ENCODE measurements at regions of chr15 and their contacts with region 1.

Region 1: DNA sequence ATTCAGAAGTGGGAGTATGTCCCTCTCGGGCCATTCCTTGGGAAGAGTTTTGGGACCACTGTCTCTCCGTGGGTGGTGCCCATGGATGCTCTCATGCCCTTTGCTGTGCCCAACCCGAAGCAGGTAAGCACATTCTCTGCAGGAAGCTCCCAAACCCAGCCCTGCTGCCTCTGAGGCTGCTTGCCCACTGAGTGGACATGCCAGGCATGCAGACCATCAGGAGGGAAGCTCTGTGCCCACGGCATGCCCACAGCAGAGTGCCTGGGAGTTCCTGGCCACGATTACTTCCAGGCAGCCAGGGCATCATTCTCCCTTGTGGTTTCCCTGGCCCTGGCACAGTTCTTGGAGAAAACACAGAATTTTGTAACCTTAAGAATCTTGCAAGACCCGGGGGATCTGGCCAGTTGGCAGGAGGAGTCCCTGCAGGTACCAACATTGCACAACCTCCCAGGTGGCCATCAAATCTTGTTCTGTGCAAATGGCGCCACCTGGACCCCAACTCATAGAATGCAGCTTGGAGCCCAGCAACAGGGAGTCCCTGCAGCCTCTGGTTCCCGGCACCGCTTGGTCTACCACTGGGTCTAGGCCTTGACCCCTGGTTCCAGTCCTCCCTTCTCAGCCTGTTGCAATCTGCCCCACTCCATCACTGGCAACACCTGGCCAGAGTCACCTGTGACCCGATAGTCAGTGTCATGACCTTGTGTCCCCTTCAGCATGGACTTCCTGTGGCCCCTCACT is 20.4 kb downstream of the FAH start:
- DNase-seq: peak; percentile 84
- H3K4me3 Mint-ChIP-seq: no peak overlapping the region
- H3K27ac Mint-ChIP-seq: no peak overlapping the region
- H3K4me1 Mint-ChIP-seq: no peaks in the 10 kb centered on the region
- H3K27me3 Mint-ChIP-seq: no peaks in the 10 kb centered on the region

Region 2: GRCh38 chr15:79853458-79854328 is 319.5 kb before region 1 on chr15:
- CTCF ChIA-PET with region 1: interaction called, 12 read pairs
- DNase-seq: peak; percentile 70
- H3K4me3 Mint-ChIP-seq: no peak overlapping the region
- H3K27ac Mint-ChIP-seq: no peak overlapping the region
- H3K4me1 Mint-ChIP-seq: peaks cover 12% of the 10 kb centered on the region
- H3K27me3 Mint-ChIP-seq: no peaks in the 10 kb centered on the region

Region 3: GRCh38 chr15:79989682-79990081 is 183.5 kb before region 1 on chr15:
- CTCF ChIA-PET with region 1: interaction called, 10 read pairs
- DNase-seq: no peak
- H3K4me3 Mint-ChIP-seq: no peak overlapping the region
- H3K27ac Mint-ChIP-seq: no peak overlapping the region
- H3K4me1 Mint-ChIP-seq: peaks cover 3% of the 10 kb centered on the region
- H3K27me3 Mint-ChIP-seq: peaks cover 21% of the 10 kb centered on the region

Region 4: GRCh38 chr15:80041494-80042253 is 131.5 kb before region 1 on chr15:
- CTCF ChIA-PET with region 1: no interaction called
- DNase-seq: no peak
- H3K4me3 Mint-ChIP-seq: no peak overlapping the region
- H3K27ac Mint-ChIP-seq: no peak overlapping the region
- H3K4me1 Mint-ChIP-seq: no peaks in the 10 kb centered on the region
- H3K27me3 Mint-ChIP-seq: peaks cover 7% of the 10 kb centered on the region

Region 5: DNA sequence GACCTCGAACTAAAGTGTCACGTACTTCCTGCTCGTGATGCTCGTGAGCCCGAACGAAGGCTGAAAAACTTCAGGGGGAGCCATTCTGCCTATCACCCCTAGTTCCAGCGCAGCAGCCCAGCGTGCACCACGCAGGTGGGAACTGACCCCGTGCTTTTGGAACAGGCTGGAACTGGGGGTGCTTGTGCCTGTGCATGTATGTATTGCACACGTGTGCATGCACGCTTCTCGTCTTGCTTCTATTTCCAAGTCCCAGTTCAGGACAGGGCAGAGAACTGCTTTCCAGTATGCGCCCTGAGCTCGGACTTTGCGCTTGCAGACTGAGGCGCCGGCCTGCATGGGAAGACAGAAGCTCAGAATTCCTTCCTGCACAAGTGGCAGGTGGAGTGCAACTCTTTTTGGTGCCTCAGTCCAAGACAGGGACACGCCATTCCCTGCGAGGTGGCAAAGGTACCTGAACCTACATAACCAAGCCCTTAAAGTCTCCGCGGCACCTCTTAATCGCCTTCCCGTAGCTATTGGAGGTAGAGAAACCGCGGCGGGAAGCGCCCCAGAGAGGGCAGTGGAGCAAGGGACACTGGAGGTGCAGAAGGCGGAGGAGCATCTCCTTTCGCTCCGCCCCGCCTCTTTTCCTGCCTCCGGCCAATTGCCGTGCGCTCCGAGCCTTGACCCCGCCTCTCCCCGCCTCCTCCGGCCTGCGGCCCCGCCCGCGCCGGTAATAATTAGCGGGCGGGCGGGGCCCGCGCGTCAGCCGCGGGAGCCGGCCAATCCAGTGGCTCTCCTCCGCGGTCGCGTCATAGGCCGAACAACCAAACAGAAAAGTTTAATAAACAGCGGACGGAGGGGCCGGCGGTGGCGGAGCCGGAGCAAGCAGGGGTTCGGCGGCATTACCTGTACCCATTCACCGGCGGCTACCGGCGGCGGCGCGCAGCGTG is 114.1 kb before region 1 on chr15 and contains the start of gene ZFAND6:
- CTCF ChIA-PET with region 1: interaction called, 22 read pairs
- DNase-seq: peak; percentile 97
- H3K4me3 Mint-ChIP-seq: peak within 1 kb of the TSS; percentile 89
- H3K27ac Mint-ChIP-seq: peak within 1 kb of the TSS; percentile 96
- H3K4me1 Mint-ChIP-seq: peaks cover 38% of the 10 kb centered on the region
- H3K27me3 Mint-ChIP-seq: no peaks in the 10 kb centered on the region

Region 6: GRCh38 chr15:80160570-80161156 is 12.5 kb before region 1 on chr15:
- CTCF ChIA-PET with region 1: interaction called, 10 read pairs
- DNase-seq: peak; percentile 68
- H3K4me3 Mint-ChIP-seq: no peak overlapping the region
- H3K27ac Mint-ChIP-seq: peak overlapping the region; percentile 86
- H3K4me1 Mint-ChIP-seq: peaks cover 26% of the 10 kb centered on the region
- H3K27me3 Mint-ChIP-seq: no peaks in the 10 kb centered on the region

Region 7: GRCh38 chr15:80234883-80235282 is 61.7 kb after region 1 on chr15:
- CTCF ChIA-PET with region 1: no interaction called
- DNase-seq: peak; percentile 62
- H3K4me3 Mint-ChIP-seq: no peak overlapping the region
- H3K27ac Mint-ChIP-seq: no peak overlapping the region
- H3K4me1 Mint-ChIP-seq: no peaks in the 10 kb centered on the region
- H3K27me3 Mint-ChIP-seq: peaks cover 26% of the 10 kb centered on the region

Region 8: GRCh38 chr15:80309769-80310384 is 136.7 kb after region 1 on chr15:
- CTCF ChIA-PET with region 1: no interaction called
- DNase-seq: no peak
- H3K4me3 Mint-ChIP-seq: no peak overlapping the region
- H3K27ac Mint-ChIP-seq: no peak overlapping the region
- H3K4me1 Mint-ChIP-seq: no peaks in the 10 kb centered on the region
- H3K27me3 Mint-ChIP-seq: peaks cover 6% of the 10 kb centered on the region

Measured in activated naive CD4-positive, alpha-beta T cell treated with anti-CD3 and anti-CD28 coated beads, Interleukin-2, amount 10 ng/mL, durations not matched to agents 7 days and 5 days (primary cell).